ENCODE measurements at regions of chr1 and their contacts with region 1.

Region 1: DNA sequence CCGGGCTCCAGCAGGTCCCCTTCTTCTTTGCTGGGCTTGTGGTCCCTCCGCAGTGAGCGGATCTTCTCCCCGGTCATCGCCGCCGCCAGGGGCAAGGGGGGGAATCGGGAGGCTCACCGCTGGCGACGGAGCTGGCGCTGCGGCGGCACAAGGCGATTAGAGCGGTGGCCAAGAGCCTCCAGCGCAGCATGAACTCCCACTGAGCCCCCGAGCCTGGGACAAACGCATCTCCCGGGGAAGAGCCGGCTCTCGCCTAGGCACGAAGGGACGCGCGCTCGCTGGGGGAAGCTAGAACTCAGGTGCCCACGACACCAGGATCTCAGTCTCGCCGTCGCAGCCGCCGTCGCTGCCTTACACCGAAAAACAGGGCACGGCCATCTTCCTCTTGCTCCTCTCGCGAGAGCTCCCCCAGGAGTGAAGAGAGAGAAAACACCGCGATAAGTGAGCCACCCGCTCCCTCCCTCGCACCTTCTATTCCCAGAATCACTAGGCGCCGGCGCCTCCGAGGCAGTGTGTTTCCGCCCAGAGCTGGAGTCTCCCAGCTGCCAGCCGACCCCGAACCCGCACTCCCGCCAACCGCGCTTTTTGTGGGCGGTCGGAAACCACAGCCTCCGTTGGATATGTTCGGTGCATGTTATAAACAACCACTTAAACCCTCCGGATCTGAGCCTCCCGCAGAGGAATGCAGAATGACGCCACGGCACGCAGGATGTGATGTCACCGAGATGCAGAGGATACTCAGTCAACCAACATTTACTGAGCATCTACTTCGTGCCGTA is at the start of gene ANKRD13C:
- DNase-seq: peak; percentile 98
- H3K4me3 ChIP-seq: peak within 1 kb of the TSS; percentile 82 to 88 (median 88)
- H3K27ac ChIP-seq: peak within 1 kb of the TSS; percentile 90 to 98 (median 94)
- H3K4me1 ChIP-seq: peaks cover 21 to 58% (median 53%) of the 10 kb centered on the region in 4 donors
- H3K27me3 ChIP-seq: no peaks in the 10 kb centered on the region
- CTCF ChIP-seq: peak in 1 of 3 experiments; percentile 3
- EP300 ChIP-seq: no peak
- POLR2A ChIP-seq: peak; percentile 60
- total RNA-seq, gene ANKRD13C: 23.0 to 30.2 (median 26.5) TPM

Region 2: GRCh38 chr1:70221241-70222121 is 133.0 kb before region 1 on chr1 and contains the start of gene SRSF11:
- intact Hi-C with region 1: loop called (anchors 1 kb)
- DNase-seq: peak; percentile 98
- H3K4me3 ChIP-seq: peak within 1 kb of the TSS; percentile 79 to 86 (median 82)
- H3K27ac ChIP-seq: peak within 1 kb of the TSS; percentile 94 to 97 (median 96)
- H3K4me1 ChIP-seq: peaks cover 47 to 54% (median 50%) of the 10 kb centered on the region in 4 donors
- H3K27me3 ChIP-seq: no peaks in the 10 kb centered on the region
- CTCF ChIP-seq: peak in 2 of 3 experiments; percentile 8 to 28
- EP300 ChIP-seq: no peak
- POLR2A ChIP-seq: peak; percentile 21
- total RNA-seq, gene SRSF11: 72.6 to 127 (median 86.3) TPM

Region 3: GRCh38 chr1:70410604-70411359 is 56.3 kb after region 1 on chr1 and contains the start of gene CTH:
- intact Hi-C with region 1: loop called (anchors 2 kb)
- DNase-seq: peak; percentile 99
- H3K4me3 ChIP-seq: peak within 1 kb of the TSS; percentile 66 to 84 (median 75)
- H3K27ac ChIP-seq: peak within 1 kb of the TSS; percentile 93 to 96 (median 95)
- H3K4me1 ChIP-seq: peaks cover 14 to 26% (median 24%) of the 10 kb centered on the region in 4 donors
- H3K27me3 ChIP-seq: no peaks in the 10 kb centered on the region
- CTCF ChIP-seq: no peak
- EP300 ChIP-seq: peak; percentile 44
- POLR2A ChIP-seq: peak; percentile 57
- total RNA-seq, gene CTH: 1.1 to 5.0 (median 3.8) TPM

Measured in esophagus muscularis mucosa (tissue), 4 donors.